Transverse colon (tissue), 4 donors: ENCODE measurements at regions of chr14 and their contacts with region 1.

Region 1: DNA sequence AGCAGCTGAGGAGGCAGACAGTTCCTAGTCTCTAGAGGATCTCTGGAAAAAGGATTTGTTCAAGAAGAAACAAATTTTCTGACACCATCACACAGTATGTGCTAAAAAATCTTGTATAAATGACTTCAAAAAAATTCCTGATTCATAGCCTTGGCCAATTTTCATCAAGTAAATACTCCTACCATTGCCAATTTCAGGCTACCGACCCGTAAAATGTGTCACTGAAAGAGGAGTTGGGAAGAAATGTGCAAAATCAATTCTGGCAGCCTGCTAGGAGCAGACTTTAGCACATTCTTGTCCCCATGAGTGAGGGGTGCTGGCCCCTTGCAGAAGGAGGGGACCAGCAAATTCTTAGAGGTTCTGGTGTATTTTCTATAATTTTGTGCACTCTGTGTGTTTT is 109.4 kb downstream of the TMEM30B start:
- DNase-seq: no peak
- H3K4me3 ChIP-seq: no peak overlapping the region
- H3K27ac ChIP-seq: no peak overlapping the region
- H3K4me1 ChIP-seq: no peaks in the 10 kb centered on the region
- H3K27me3 ChIP-seq: no peaks in the 10 kb centered on the region
- CTCF ChIP-seq: no peak
- EP300 ChIP-seq: no peak
- POLR2A ChIP-seq: no peak

Region 2: GRCh38 chr14:60420050-60420449 is 751.7 kb before region 1 on chr14:
- in situ Hi-C with region 1: no loop called
- intact Hi-C with region 1: no loop called
- DNase-seq: no peak
- H3K4me3 ChIP-seq: no peak overlapping the region
- H3K27ac ChIP-seq: no peak overlapping the region
- H3K4me1 ChIP-seq: no peaks in the 10 kb centered on the region
- H3K27me3 ChIP-seq: no peaks in the 10 kb centered on the region
- CTCF ChIP-seq: no peak
- EP300 ChIP-seq: no peak
- POLR2A ChIP-seq: no peak

Region 3: DNA sequence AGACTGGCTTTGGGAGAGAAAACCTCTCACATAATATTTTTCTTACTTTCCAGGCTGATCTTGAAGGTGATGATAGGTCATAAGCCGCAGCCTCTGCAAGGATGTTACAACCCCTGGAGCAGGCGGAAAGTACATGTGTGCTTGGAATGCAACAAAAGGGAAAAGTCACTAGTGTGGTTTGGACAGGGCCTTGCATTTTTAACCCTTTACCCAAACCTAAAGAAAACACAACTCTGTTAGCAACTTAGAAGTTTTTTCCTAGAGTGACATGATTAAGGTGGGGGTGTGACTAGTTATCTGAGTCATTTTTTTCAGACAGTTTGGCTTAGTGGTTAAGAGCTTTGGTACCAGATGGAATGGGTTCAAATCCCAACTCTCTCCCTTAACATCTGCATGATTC is 12.4 kb after region 1 on chr14:
- in situ Hi-C with region 1: no loop called
- intact Hi-C with region 1: no loop called
- DNase-seq: no peak
- H3K4me3 ChIP-seq: no peak overlapping the region
- H3K27ac ChIP-seq: no peak overlapping the region
- H3K4me1 ChIP-seq: no peaks in the 10 kb centered on the region
- H3K27me3 ChIP-seq: peaks cover 5% of the 10 kb centered on the region
- CTCF ChIP-seq: no peak
- EP300 ChIP-seq: no peak
- POLR2A ChIP-seq: no peak

Region 4: GRCh38 chr14:61196792-61197191 is 25.1 kb after region 1 on chr14:
- in situ Hi-C with region 1: no loop called
- intact Hi-C with region 1: loop called (anchors 1 kb)
- DNase-seq: no peak
- H3K4me3 ChIP-seq: no peak overlapping the region
- H3K27ac ChIP-seq: no peak overlapping the region
- H3K4me1 ChIP-seq: no peaks in the 10 kb centered on the region
- H3K27me3 ChIP-seq: no peaks in the 10 kb centered on the region
- CTCF ChIP-seq: no peak
- EP300 ChIP-seq: no peak
- POLR2A ChIP-seq: no peak